Activated CD4-positive, alpha-beta T cell treated with anti-CD3 and anti-CD28 coated beads for 36 hours (primary cell): ENCODE measurements at regions of chr7 and their contacts with region 1.

Region 1: GRCh38 chr7:3300651-3301378 is at the start of gene SDK1:
- DNase-seq: peak; percentile 96
- ATAC-seq: peak; percentile 86
- H3K4me3 Mint-ChIP-seq: peak within 1 kb of the TSS; percentile 75
- H3K27ac Mint-ChIP-seq: no peak within 1 kb of the TSS
- H3K4me1 Mint-ChIP-seq: peaks cover 12% of the 10 kb centered on the region
- H3K27me3 Mint-ChIP-seq: peaks cover 22% of the 10 kb centered on the region
- total RNA-seq, gene SDK1: 1.1 to 1.9 TPM

Region 2: GRCh38 chr7:2870471-2870931 is 430.3 kb before region 1 on chr7:
- CTCF ChIA-PET with region 1: interaction called, 3 read pairs
- POLR2A ChIA-PET with region 1: no interaction called
- intact Hi-C with region 1: loop called (anchors 2 to 5 kb)
- DNase-seq: peak; percentile 80
- ATAC-seq: peak; percentile 91
- H3K4me3 Mint-ChIP-seq: peak overlapping the region; percentile 69
- H3K27ac Mint-ChIP-seq: peak overlapping the region; percentile 96
- H3K4me1 Mint-ChIP-seq: peaks cover 52% of the 10 kb centered on the region
- H3K27me3 Mint-ChIP-seq: no peaks in the 10 kb centered on the region

Region 3: GRCh38 chr7:3461923-3462322 is 161.1 kb after region 1 on chr7:
- CTCF ChIA-PET with region 1: interaction called, 4 read pairs
- POLR2A ChIA-PET with region 1: no interaction called
- intact Hi-C with region 1: loop called (anchors 1 to 5 kb)
- DNase-seq: peak; percentile 85
- ATAC-seq: peak; percentile 93
- H3K4me3 Mint-ChIP-seq: peak overlapping the region; percentile 65
- H3K27ac Mint-ChIP-seq: peak overlapping the region; percentile 87
- H3K4me1 Mint-ChIP-seq: peaks cover 59% of the 10 kb centered on the region
- H3K27me3 Mint-ChIP-seq: no peaks in the 10 kb centered on the region

Region 4: DNA sequence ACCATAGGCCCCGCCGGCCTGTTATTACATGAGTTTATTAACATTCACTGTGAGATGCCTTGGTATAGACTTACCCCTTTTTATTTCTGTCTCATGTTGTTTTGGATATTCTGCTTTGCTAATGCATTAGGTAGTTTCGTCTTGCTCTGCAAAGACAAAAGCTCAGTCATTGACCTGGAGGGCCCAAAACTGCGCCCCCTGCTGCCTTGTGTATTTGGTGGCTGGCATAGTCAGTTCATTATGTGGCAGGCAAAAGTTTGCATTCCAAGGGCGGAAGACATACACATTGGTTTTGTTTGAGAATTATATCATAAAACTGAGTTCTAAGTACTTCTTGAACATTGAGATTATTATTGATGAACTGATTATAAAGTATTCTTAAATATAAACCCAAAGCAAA is 372.7 kb after region 1 on chr7:
- CTCF ChIA-PET with region 1: interaction called, 8 read pairs
- POLR2A ChIA-PET with region 1: no interaction called
- intact Hi-C with region 1: loop called (anchors 1 to 2 kb)
- DNase-seq: peak; percentile 77
- ATAC-seq: no peak
- H3K4me3 Mint-ChIP-seq: no peak overlapping the region
- H3K27ac Mint-ChIP-seq: no peak overlapping the region
- H3K4me1 Mint-ChIP-seq: peaks cover 2% of the 10 kb centered on the region
- H3K27me3 Mint-ChIP-seq: no peaks in the 10 kb centered on the region

Region 5: GRCh38 chr7:3897438-3898385 is 596.9 kb after region 1 on chr7:
- CTCF ChIA-PET with region 1: no interaction called
- POLR2A ChIA-PET with region 1: no interaction called
- intact Hi-C with region 1: loop called (anchors 1 kb)
- DNase-seq: peak; percentile 67
- ATAC-seq: peak; percentile 60
- H3K4me3 Mint-ChIP-seq: no peak overlapping the region
- H3K27ac Mint-ChIP-seq: no peak overlapping the region
- H3K4me1 Mint-ChIP-seq: no peaks in the 10 kb centered on the region
- H3K27me3 Mint-ChIP-seq: peaks cover 4% of the 10 kb centered on the region